GM12878 (cell line): ENCODE measurements at regions of chr1 and their contacts with region 1.

Region 1: DNA sequence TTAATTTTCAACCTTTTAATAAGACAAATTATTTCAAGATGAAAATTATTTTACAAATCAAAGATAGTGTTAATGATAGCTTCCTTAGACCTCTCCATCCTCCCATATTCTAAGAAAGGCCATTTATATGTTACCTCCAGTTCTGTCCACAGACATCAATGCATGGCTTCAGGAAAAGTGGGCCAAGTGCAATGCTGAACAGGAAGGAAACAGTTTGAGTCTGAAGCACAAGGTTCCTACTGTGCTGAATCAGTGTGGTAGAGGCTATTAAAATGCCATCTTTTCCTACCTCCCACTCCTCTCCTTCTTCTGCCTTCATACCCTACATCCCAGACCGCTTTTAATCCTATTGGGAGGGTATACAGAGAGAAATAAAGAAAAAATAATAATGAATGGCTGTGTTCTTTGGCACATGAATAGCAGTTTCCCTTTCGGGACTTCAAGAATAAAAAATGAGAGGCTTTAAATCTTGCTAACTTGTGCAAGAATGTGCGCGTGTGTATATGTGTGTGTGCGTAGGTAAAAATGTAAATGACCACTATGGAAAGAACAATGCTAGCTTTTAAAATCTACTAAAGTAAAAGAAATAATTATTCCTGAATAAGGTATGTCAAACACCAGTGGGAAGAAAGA is 62.6 kb upstream of the C1orf105 start:
- DNase-seq: no peak
- ATAC-seq: peak; percentile 35
- H3K4me3 ChIP-seq: 0 out of 2 replicates have a peak overlapping the region, but pooled peaks have one; percentile 12
- H3K27ac ChIP-seq: peak overlapping the region; percentile 96
- H3K4me1 ChIP-seq: peaks cover 48% of the 10 kb centered on the region
- H3K27me3 ChIP-seq: no peaks in the 10 kb centered on the region
- CTCF ChIP-seq: no peak
- EP300 ChIP-seq: no peak
- POLR2A ChIP-seq: no peak
- RAD21 ChIP-seq: no peak

Region 2: GRCh38 chr1:171636141-171636540 is 721.7 kb before region 1 on chr1:
- CTCF ChIA-PET with region 1: no interaction called
- POLR2A ChIA-PET with region 1: no interaction called
- RAD21 ChIA-PET with region 1: no interaction called
- SMC1A ChIA-PET with region 1: no interaction called
- in situ Hi-C with region 1: no loop called
- intact Hi-C with region 1: no loop called
- DNase-seq: no peak
- ATAC-seq: no peak
- H3K4me3 ChIP-seq: no peak overlapping the region
- H3K27ac ChIP-seq: no peak overlapping the region
- H3K4me1 ChIP-seq: no peaks in the 10 kb centered on the region
- H3K27me3 ChIP-seq: peaks cover 0 to 4% of the 10 kb centered on the region in 2 experiments; a peak in 1 of 4 replicates
- CTCF ChIP-seq: no peak
- EP300 ChIP-seq: no peak
- POLR2A ChIP-seq: no peak
- RAD21 ChIP-seq: no peak

Region 3: DNA sequence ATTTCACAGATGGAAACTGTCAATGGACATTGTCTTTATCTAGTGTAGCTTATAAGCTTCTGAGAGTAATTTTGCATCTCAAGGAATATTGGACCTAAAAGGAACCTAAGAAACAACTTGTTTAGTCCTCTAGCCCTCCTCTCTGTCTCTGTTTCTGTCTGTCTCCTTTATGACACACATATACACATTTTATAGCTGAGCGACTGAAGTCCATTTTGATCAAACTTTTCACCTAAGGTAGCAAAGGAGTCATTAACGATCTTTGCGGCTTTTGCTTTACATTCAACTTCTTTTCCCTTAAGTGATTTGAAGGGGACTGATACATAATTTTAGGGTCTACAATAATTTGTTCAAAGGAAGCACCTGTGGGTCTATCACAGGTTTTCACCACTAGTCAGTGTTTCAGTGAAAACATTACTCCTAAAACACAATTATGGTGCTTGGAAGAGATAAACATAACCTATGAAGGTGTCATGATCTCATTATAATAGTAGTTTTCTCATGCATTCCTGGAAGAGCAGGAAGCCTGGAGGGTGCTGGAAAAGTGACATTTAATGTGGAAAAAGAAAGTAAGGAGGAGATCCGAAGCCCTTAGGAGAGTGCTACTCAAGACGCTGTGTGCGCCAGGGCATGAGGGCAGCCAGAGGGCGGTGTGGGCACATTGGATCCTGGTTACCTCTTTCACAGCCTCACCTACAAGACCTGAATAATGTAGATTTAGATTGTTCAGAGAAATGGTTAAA is 267.9 kb before region 1 on chr1:
- CTCF ChIA-PET with region 1: interaction called, 5 read pairs
- POLR2A ChIA-PET with region 1: no interaction called
- RAD21 ChIA-PET with region 1: interaction called, 8 read pairs
- SMC1A ChIA-PET with region 1: interaction called, 17 read pairs
- in situ Hi-C with region 1: no loop called
- intact Hi-C with region 1: loop called (anchors 1 kb)
- DNase-seq: peak; percentile 50
- ATAC-seq: peak; percentile 100
- H3K4me3 ChIP-seq: no peak overlapping the region
- H3K27ac ChIP-seq: no peak overlapping the region
- H3K4me1 ChIP-seq: no peaks in the 10 kb centered on the region
- H3K27me3 ChIP-seq: no peaks in the 10 kb centered on the region
- CTCF ChIP-seq: peak; percentile 78 to 89 (median 79)
- EP300 ChIP-seq: no peak
- POLR2A ChIP-seq: no peak
- RAD21 ChIP-seq: peak; percentile 85

Region 4: GRCh38 chr1:172343240-172344160 is 14.4 kb before region 1 on chr1:
- CTCF ChIA-PET with region 1: interaction called, 85 read pairs
- POLR2A ChIA-PET with region 1: interaction called, 63 read pairs
- RAD21 ChIA-PET with region 1: interaction called, 407 read pairs
- SMC1A ChIA-PET with region 1: interaction called, 489 read pairs
- in situ Hi-C with region 1: no loop called
- intact Hi-C with region 1: loop called (anchors 1 kb)
- DNase-seq: no peak
- ATAC-seq: peak; percentile 37
- H3K4me3 ChIP-seq: no peak overlapping the region
- H3K27ac ChIP-seq: peak overlapping the region; percentile 98
- H3K4me1 ChIP-seq: peaks cover 58% of the 10 kb centered on the region
- H3K27me3 ChIP-seq: no peaks in the 10 kb centered on the region
- CTCF ChIP-seq: no peak
- EP300 ChIP-seq: peak in 1 of 2 experiments; percentile 13; a peak in 1 of 4 replicates
- POLR2A ChIP-seq: no peak
- RAD21 ChIP-seq: no peak

Region 5: GRCh38 chr1:172380441-172381244 is 22.8 kb after region 1 on chr1:
- CTCF ChIA-PET with region 1: interaction called, 64 read pairs
- POLR2A ChIA-PET with region 1: interaction called, 42 read pairs
- RAD21 ChIA-PET with region 1: interaction called, 90 read pairs
- SMC1A ChIA-PET with region 1: interaction called, 336 read pairs
- in situ Hi-C with region 1: no loop called
- intact Hi-C with region 1: loop called (anchors 1 kb)
- DNase-seq: no peak
- ATAC-seq: peak; percentile 98
- H3K4me3 ChIP-seq: peak overlapping the region; percentile 4; the same call in 1 of the 2 replicates
- H3K27ac ChIP-seq: peak overlapping the region; percentile 93
- H3K4me1 ChIP-seq: peaks cover 20% of the 10 kb centered on the region
- H3K27me3 ChIP-seq: no peaks in the 10 kb centered on the region
- CTCF ChIP-seq: peak in 1 of 3 experiments; percentile 19; a peak in 1 of 6 replicates
- EP300 ChIP-seq: peak; percentile 16 to 83; a peak in 3 of 4 replicates
- POLR2A ChIP-seq: no peak
- RAD21 ChIP-seq: peak; percentile 27; the same call in 1 of the 2 replicates

Region 6: DNA sequence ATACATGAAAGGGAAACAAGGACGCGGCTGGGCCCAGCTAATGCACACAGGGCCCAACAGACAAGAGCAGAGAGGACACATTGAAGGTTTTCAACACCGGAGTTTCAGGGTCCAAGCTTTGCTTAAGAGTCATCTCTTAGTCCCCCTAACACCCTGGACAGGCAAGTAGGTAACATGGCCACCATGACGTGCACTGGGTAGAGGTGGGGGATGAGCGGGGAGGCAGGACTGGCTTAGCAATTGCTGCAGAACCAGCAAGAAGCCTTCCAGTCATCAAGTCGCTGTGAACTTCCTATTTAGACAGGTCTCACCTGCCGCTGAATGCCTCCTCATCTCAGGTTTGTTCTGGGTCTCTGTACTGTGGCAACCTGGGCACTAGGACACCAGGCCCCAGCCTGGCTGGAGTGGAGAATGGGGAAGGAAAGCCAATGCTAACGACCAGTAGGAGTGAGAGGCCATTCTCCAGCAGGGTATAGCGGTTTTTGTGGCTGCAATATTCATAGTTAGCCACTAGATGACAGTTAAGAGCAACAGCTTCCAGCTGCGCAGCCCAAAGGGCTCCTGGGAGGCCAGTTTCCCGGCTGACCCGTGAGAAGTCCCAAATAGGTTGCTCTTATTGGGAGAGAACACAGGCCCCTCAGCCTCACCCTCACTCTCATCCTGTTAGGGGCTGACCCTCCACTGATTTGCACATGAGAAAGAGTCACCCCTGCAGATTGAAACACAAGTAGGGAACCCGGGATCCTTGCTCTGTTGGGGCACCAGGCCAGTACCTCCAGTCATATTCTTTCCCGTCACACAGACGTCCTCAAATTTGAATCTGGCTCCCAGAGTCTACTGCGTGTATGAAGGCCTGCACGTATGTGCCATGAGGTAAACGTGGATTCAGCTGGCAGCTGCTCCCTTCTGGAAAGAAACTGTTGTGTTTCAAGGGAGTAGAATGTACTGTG is 92.0 kb after region 1 on chr1:
- CTCF ChIA-PET with region 1: no interaction called
- POLR2A ChIA-PET with region 1: no interaction called
- RAD21 ChIA-PET with region 1: no interaction called
- SMC1A ChIA-PET with region 1: no interaction called
- in situ Hi-C with region 1: no loop called
- intact Hi-C with region 1: no loop called
- DNase-seq: no peak
- ATAC-seq: peak; percentile 96
- H3K4me3 ChIP-seq: no peak overlapping the region
- H3K27ac ChIP-seq: no peak overlapping the region
- H3K4me1 ChIP-seq: no peaks in the 10 kb centered on the region
- H3K27me3 ChIP-seq: no peaks in the 10 kb centered on the region; a peak in 1 of 4 replicates
- CTCF ChIP-seq: peak; percentile 83 to 88 (median 84)
- EP300 ChIP-seq: no peak
- POLR2A ChIP-seq: no peak
- RAD21 ChIP-seq: peak; percentile 72

Region 7: DNA sequence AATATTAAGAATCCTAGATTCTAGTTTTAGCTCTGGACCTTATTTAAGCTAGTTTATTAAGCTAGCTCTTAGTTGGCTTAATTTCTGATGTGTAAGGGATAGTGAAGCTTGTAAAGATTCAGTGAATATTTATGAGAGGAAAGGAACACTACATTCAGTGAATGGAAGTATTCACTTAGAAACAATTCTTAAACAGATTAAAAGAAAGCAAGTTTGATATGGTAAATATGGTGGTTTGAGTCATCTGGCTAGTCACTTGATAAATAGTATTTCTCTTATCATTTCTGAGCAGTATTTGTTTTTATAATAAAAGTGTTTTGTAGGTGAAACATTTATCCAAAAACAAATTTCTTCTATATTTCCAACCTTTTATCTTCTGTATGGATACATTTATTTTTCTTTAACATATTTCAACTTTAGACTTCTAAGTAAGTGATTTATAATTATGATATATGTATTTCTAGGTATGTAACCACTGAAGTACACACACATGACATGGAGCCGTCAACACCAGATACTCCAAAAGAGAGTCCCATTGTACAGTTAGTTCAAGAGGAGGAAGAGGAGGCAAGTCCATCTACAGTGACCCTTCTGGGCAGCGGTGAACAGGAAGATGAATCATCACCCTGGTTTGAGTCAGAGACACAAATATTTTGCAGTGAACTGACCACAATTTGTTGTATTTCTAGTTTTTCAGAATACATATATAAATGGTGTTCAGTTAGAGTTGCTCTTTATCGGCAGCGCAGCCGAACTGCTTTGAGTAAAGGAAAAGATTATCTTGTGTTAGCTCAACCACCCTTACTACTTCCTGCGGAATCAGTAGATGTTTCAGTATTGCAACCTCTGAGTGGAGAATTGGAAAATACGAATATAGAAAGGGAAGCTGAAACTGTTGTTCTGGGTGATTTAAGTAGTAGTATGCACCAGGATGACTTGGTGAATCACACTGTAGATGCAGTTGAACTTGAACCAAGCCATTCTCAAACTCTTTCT is 230.7 kb after region 1 on chr1:
- CTCF ChIA-PET with region 1: no interaction called
- POLR2A ChIA-PET with region 1: no interaction called
- RAD21 ChIA-PET with region 1: no interaction called
- SMC1A ChIA-PET with region 1: no interaction called
- in situ Hi-C with region 1: no loop called
- intact Hi-C with region 1: no loop called
- DNase-seq: no peak
- ATAC-seq: peak; percentile 48
- H3K4me3 ChIP-seq: no peak overlapping the region
- H3K27ac ChIP-seq: no peak overlapping the region; the same call in 1 of the 2 replicates
- H3K4me1 ChIP-seq: peaks cover 4% of the 10 kb centered on the region; the same call in 1 of the 2 replicates
- H3K27me3 ChIP-seq: no peaks in the 10 kb centered on the region
- CTCF ChIP-seq: no peak
- EP300 ChIP-seq: no peak
- POLR2A ChIP-seq: no peak
- RAD21 ChIP-seq: no peak